Sigmoid colon (tissue), 7 donors: ENCODE measurements at regions of chr1 and their contacts with region 1.

Region 1: DNA sequence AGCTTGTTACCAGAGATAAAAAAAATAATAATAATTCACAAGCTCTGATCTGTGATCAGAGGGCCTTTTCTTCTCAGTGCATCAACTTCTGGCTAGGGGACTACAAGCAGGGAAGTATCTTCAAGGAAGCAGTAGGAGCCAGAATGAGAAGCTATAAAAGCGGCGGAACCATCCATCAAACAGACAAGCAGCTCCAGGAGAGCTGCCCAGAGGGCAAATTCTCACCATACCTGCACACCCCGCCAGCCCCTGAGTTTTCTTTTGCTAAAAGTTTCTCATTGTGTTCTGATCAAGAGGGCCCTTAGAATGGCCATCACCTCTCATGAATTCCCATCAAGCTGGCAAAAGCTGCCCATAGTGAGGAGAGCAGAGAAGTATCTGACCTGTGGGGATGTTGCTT is 99.4 kb downstream of the SMYD2 start:
- DNase-seq: no peak
- H3K4me3 ChIP-seq: no peak overlapping the region
- H3K27ac ChIP-seq: peak overlapping the region; percentile 48 to 69 (median 60)
- H3K4me1 ChIP-seq: peaks cover 0 to 24% (median 6%) of the 10 kb centered on the region in 4 donors
- H3K27me3 ChIP-seq: no peaks in the 10 kb centered on the region
- CTCF ChIP-seq: no peak
- EP300 ChIP-seq: peak in 1 of 4 donors; percentile 6
- POLR2A ChIP-seq: no peak

Region 2: DNA sequence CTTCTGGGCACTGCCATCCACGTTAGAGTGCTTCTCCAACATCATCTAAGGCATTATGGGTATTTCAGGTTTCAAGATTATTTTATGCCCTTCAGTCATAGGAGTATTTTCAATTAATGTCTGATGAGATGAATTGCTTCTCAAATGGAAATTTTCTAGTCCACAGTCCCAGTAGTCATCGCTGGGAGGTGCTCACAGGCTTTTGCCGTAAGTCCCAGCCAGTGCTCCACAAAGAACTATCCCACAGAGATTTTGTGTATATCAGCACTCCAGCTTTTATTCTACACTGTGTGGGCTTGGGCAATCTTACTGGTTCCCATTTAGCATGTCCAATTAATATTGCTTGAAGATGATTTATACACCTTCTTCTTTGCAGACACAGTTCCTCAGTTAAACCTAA is 38.5 kb before region 1 on chr1:
- intact Hi-C with region 1: loop called (anchors 5 kb)
- DNase-seq: no peak
- H3K4me3 ChIP-seq: no peak overlapping the region
- H3K27ac ChIP-seq: no peak overlapping the region
- H3K4me1 ChIP-seq: peaks cover 0 to 22% (median 18%) of the 10 kb centered on the region in 4 donors
- H3K27me3 ChIP-seq: no peaks in the 10 kb centered on the region
- CTCF ChIP-seq: no peak
- EP300 ChIP-seq: no peak
- POLR2A ChIP-seq: no peak